Transverse colon (tissue), 4 donors: ENCODE measurements at regions of chr5 and their contacts with region 1.

Region 1: GRCh38 chr5:42767491-42768105 is 11.0 kb downstream of the CCDC152 start:
- DNase-seq: no peak
- H3K4me3 ChIP-seq: no peak overlapping the region
- H3K27ac ChIP-seq: no peak overlapping the region
- H3K4me1 ChIP-seq: peaks cover 0 to 5% (median 0%) of the 10 kb centered on the region in 4 donors
- H3K27me3 ChIP-seq: peaks cover 5% of the 10 kb centered on the region
- CTCF ChIP-seq: peak; percentile 44 to 58 (median 48)
- EP300 ChIP-seq: no peak
- POLR2A ChIP-seq: no peak

Region 2: DNA sequence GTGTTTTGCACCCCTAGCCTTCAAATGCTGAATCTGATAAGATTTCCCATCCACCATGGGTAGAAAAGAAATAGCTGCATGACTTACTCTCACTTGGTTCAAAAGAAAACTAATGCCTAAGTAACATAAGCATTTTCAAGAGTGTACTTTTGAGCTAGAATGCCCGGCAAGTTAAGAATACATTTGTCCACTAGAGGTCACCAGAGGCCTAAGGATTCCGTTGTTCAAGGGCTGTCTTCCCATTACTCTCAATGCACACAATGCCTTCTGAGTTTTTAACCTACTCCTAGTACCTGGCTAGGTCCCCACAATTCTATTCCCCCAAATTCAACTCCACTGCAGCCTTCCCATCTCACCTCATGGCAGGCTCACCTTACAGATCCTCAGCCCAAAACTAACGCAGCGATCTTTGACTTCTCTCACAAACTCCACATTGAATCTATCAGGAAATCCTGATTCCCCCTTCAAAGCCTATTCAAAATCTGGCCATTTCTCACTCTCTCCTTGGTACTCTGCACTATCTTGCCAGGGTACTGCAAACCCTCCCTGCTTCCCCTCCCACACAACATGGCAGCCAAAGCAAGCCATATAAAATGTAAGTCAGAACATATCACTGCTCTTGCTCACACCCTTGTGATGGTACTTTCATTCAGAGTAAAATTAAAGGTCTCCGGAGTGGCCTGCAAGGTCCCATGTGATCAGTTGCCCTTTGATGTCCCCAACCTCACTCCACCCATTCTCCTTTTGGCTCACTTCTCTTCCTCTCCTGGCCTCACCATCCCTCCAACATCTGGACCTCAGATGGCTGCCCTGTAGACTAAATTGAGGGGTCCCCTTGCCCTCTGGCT is 910.7 kb before region 1 on chr5:
- in situ Hi-C with region 1: loop called in 3 of 4 experiments (anchors 10 to 25 kb)
- intact Hi-C with region 1: loop called (anchors 10 kb)
- DNase-seq: peak; percentile 26
- H3K4me3 ChIP-seq: no peak overlapping the region
- H3K27ac ChIP-seq: no peak overlapping the region
- H3K4me1 ChIP-seq: no peaks in the 10 kb centered on the region
- H3K27me3 ChIP-seq: no peaks in the 10 kb centered on the region
- CTCF ChIP-seq: peak; percentile 60 to 82 (median 76)
- EP300 ChIP-seq: no peak
- POLR2A ChIP-seq: no peak

Region 3: GRCh38 chr5:41869739-41870626 is 897.6 kb before region 1 on chr5 and contains the start of gene OXCT1:
- in situ Hi-C with region 1: loop called in 3 of 4 experiments (anchors 10 to 25 kb)
- intact Hi-C with region 1: no loop called
- DNase-seq: peak; percentile 89
- H3K4me3 ChIP-seq: peak within 1 kb of the TSS; percentile 42 to 89 (median 53)
- H3K27ac ChIP-seq: peak within 1 kb of the TSS; percentile 86 to 91 (median 88)
- H3K4me1 ChIP-seq: peaks cover 4 to 24% (median 16%) of the 10 kb centered on the region in 4 donors
- H3K27me3 ChIP-seq: no peaks in the 10 kb centered on the region
- CTCF ChIP-seq: peak in 2 of 5 experiments; percentile 7 to 12
- EP300 ChIP-seq: no peak
- POLR2A ChIP-seq: peak; percentile 89
- total RNA-seq, gene OXCT1: 7.4 to 12.7 (median 8.4) TPM

Region 4: DNA sequence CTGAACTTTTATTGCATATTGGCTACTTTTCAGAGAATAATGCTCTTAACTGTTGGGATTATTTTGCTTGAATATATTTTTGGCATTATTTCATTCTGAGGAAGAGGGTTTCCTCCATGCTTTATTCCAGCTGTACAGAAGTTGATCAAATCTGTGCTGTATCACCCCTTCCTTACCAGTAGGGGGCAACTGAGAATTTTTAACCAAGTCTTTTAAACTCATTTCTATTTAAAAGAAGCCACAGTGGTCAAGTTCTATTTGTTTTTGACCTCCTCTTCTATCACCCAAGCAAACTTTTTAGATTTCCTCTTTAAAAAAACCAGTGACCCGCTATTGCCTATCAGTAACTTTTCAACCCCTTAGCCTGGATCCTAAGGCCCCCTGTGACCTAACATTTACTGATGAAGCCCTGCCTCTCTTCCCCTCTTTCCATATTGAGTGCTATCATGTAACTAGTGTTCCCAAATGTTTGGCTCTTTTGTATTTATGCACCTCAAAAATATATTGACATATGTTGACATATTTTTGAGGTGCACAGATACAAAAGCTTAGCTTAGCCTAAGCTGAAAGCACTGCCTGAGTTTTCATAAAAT is 761.9 kb before region 1 on chr5:
- in situ Hi-C with region 1: loop called in 3 of 4 experiments (anchors 25 kb)
- intact Hi-C with region 1: no loop called
- DNase-seq: no peak
- H3K4me3 ChIP-seq: no peak overlapping the region
- H3K27ac ChIP-seq: no peak overlapping the region
- H3K4me1 ChIP-seq: no peaks in the 10 kb centered on the region
- H3K27me3 ChIP-seq: no peaks in the 10 kb centered on the region
- CTCF ChIP-seq: peak; percentile 45 to 73 (median 63)
- EP300 ChIP-seq: no peak
- POLR2A ChIP-seq: no peak

Region 5: DNA sequence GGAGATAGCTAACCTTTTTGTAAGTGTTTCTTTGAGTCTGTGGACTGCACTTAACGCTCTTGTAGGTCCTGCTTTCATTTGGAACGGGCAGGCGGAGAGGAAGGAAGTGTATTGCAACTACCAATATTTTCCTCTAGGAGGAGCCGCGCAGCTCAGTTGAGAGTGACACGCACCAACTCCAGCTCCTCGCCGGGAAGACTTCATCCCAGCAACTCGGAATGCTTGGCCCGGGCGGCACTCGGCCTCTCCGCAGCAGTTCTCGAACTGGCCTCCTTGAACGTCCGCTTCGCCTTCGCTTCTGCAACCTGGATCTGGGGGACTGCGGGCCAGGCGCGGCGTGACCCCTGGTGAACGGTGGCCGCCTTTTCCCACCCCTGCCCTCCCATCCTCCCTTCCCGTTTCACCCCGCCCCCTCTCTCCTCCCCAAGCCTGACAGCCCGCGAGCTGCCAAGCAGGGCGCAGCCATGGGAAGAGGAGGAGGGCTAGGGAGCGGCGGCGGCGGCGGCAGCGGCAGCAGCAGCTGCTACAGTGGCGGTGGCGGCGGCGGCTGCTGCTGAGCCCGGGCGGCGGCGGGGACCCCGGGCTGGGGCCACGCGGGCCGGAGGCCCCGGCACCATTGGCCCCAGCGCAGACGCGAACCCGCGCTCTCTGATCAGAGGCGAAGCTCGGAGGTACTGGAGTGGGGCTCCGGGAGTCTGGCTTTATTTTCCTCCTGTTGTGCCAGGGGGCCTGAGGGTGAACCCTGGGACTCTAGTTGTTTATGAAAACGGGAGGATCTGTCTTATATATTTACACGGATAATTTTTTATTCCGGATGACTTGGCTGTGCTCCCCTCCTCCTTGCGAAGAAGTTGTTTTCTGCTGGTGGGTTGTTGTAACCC is 344.1 kb before region 1 on chr5 and contains the start of gene GHR:
- in situ Hi-C with region 1: loop called in 1 of 4 experiments (anchors 25 kb)
- intact Hi-C with region 1: loop called (anchors 5 kb)
- DNase-seq: peak; percentile 82
- H3K4me3 ChIP-seq: peak within 1 kb of the TSS; percentile 47 to 67 (median 50)
- H3K27ac ChIP-seq: peak within 1 kb of the TSS; percentile 76 to 91 (median 86)
- H3K4me1 ChIP-seq: peaks cover 0 to 30% (median 5%) of the 10 kb centered on the region in 4 donors
- H3K27me3 ChIP-seq: peaks cover 7% of the 10 kb centered on the region
- CTCF ChIP-seq: peak; percentile 69 to 85 (median 79)
- EP300 ChIP-seq: no peak
- POLR2A ChIP-seq: no peak
- total RNA-seq, gene GHR: 0.40 to 11.6 (median 7.6) TPM

Region 6: DNA sequence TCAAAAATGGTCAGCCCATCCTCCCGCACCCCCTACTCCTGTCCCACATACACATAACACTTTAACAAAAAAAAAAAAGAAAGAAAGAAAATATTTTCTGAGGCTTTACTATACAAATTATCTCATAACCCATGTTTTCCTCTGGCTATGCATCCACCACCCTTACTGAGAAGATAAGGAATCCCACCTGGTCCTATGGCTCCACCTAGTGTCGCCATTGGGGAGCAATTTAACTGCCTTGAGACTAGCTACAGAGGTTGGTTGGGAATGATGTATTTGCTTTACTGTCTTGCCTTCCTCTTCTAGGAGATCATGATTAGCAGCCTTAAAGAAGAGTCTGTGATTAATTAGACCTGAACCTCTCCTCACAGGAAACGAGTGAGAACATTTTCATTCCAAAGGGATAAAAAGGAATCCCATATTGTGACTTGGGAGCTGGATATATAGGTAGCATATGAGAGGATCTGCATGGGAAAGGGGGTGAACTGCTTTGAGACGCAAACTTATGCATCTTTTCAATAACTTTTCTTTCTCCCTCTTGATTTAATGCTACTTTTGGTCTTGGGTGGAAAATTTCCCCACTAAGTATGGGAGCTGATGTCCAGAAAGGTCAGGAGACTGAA is 121.8 kb after region 1 on chr5:
- in situ Hi-C with region 1: loop called in 1 of 4 experiments (anchors 10 kb)
- intact Hi-C with region 1: no loop called
- DNase-seq: peak; percentile 89
- H3K4me3 ChIP-seq: no peak overlapping the region
- H3K27ac ChIP-seq: no peak overlapping the region
- H3K4me1 ChIP-seq: peaks cover 0 to 9% (median 4%) of the 10 kb centered on the region in 4 donors
- H3K27me3 ChIP-seq: no peaks in the 10 kb centered on the region
- CTCF ChIP-seq: peak; percentile 84 to 89 (median 87)
- EP300 ChIP-seq: no peak
- POLR2A ChIP-seq: no peak